Activated CD8-positive, alpha-beta memory T cell treated with anti-CD3 and anti-CD28 coated beads, Interleukin-2, amount 10 ng/mL, durations not matched to agents 7 days and 5 days (primary cell): ENCODE measurements at regions of chr6 and their contacts with region 1.

Region 1: GRCh38 chr6:125790358-125791150 is at the start of gene NCOA7:
- DNase-seq: peak; percentile 89
- ATAC-seq: peak; percentile 85
- H3K4me3 Mint-ChIP-seq: peak within 1 kb of the TSS; percentile 92
- H3K27ac Mint-ChIP-seq: peak within 1 kb of the TSS; percentile 99
- H3K4me1 Mint-ChIP-seq: peaks cover 54% of the 10 kb centered on the region
- H3K27me3 Mint-ChIP-seq: no peaks in the 10 kb centered on the region
- total RNA-seq, gene NCOA7: 45.3 to 46.9 TPM

Region 2: DNA sequence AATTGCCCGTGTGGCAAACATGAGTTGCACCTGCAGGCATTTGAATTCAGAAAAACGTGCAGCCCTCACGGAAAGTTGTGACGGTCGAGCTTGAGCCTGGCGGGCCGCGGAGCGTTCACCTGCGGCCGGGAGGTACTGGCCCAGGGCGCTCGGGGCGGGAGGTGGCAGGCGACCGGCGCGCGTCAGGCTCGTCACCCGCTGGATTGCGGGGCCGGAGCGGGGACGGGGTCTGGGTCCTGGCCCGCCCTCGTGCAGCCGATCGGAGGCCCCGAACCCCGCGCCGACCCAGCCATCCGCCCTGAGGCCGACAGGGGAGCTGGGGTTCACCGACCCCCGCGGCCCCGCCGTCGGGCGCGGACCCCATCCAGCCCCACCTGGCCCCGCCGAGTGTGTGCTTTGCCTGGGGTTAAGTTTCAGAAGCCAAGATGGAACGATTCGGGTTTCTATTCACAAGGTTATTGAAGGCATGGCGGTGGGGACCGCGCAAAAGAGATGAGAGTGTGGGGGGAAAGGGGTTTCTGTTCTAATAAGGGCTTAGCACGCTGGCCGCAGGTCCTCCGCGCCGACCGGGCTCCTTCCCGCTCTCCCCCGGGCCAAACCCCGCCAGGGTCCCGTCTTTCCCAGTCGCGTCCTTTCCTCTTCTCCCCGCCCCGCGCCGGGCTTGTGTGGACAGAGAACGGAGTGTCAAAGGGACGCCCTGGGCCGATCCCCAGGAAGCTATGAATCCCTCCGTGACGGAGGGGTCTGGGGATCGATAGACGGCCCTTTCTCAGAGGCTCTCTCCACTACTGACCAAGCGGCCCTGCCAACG is 42.8 kb before region 1 on chr6:
- CTCF ChIA-PET with region 1: no interaction called
- DNase-seq: peak; percentile 48
- ATAC-seq: peak; percentile 9
- H3K4me3 Mint-ChIP-seq: peak overlapping the region; percentile 82
- H3K27ac Mint-ChIP-seq: no peak overlapping the region
- H3K4me1 Mint-ChIP-seq: peaks cover 40% of the 10 kb centered on the region
- H3K27me3 Mint-ChIP-seq: peaks cover 79% of the 10 kb centered on the region

Region 3: DNA sequence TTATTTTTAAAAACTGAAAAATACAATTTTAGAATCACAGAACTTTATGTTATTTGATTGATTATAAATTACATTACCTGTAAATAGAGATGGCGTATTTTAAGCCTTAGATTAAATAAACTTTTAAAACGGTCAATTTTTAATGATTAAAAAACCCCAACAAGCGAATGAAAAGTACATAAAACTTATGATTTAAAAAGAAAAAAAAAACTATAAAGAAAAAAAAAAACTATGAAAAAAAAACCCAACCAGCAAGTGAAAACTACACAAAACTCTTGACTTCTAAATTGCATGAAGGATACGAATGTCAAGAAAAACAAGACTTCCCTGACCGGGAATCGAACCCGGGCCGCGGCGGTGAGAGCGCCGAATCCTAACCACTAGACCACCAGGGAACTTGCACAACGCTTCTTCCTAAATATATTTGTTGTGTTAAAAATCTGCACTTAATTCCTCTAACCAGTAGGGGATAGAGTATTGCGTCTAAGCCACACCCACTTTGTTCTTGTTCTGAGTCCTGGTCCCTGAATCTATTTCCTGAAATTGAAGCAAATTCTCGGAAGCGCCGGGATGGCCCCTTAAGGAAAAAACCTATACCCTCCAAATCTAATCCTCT is 10.5 kb before region 1 on chr6:
- CTCF ChIA-PET with region 1: interaction called, 87 read pairs
- DNase-seq: peak; percentile 87
- ATAC-seq: peak; percentile 81
- H3K4me3 Mint-ChIP-seq: no peak overlapping the region
- H3K27ac Mint-ChIP-seq: no peak overlapping the region
- H3K4me1 Mint-ChIP-seq: peaks cover 17% of the 10 kb centered on the region
- H3K27me3 Mint-ChIP-seq: peaks cover 20% of the 10 kb centered on the region

Region 4: GRCh38 chr6:125834348-125834747 is 43.8 kb after region 1 on chr6:
- CTCF ChIA-PET with region 1: interaction called, 14 read pairs
- DNase-seq: no peak
- ATAC-seq: peak; percentile 52
- H3K4me3 Mint-ChIP-seq: no peak overlapping the region
- H3K27ac Mint-ChIP-seq: peak overlapping the region; percentile 47
- H3K4me1 Mint-ChIP-seq: peaks cover 48% of the 10 kb centered on the region
- H3K27me3 Mint-ChIP-seq: no peaks in the 10 kb centered on the region

Region 5: GRCh38 chr6:125858427-125859320 is 68.1 kb after region 1 on chr6:
- CTCF ChIA-PET with region 1: interaction called, 17 read pairs
- DNase-seq: peak; percentile 55
- ATAC-seq: peak; percentile 72
- H3K4me3 Mint-ChIP-seq: no peak overlapping the region
- H3K27ac Mint-ChIP-seq: no peak overlapping the region
- H3K4me1 Mint-ChIP-seq: peaks cover 6% of the 10 kb centered on the region
- H3K27me3 Mint-ChIP-seq: no peaks in the 10 kb centered on the region

Region 6: GRCh38 chr6:125918681-125919566 is 128.4 kb after region 1 on chr6:
- CTCF ChIA-PET with region 1: interaction called, 15 read pairs
- DNase-seq: peak; percentile 73
- ATAC-seq: peak; percentile 94
- H3K4me3 Mint-ChIP-seq: peak overlapping the region; percentile 85
- H3K27ac Mint-ChIP-seq: peak overlapping the region; percentile 91
- H3K4me1 Mint-ChIP-seq: peaks cover 44% of the 10 kb centered on the region
- H3K27me3 Mint-ChIP-seq: no peaks in the 10 kb centered on the region

Region 7: GRCh38 chr6:125974214-125974866 is 183.8 kb after region 1 on chr6:
- CTCF ChIA-PET with region 1: interaction called, 43 read pairs
- DNase-seq: no peak
- ATAC-seq: peak; percentile 69
- H3K4me3 Mint-ChIP-seq: no peak overlapping the region
- H3K27ac Mint-ChIP-seq: peak overlapping the region; percentile 8
- H3K4me1 Mint-ChIP-seq: peaks cover 5% of the 10 kb centered on the region
- H3K27me3 Mint-ChIP-seq: no peaks in the 10 kb centered on the region

Region 8: GRCh38 chr6:126040826-126041225 is 250.3 kb after region 1 on chr6:
- CTCF ChIA-PET with region 1: no interaction called
- DNase-seq: no peak
- ATAC-seq: no peak
- H3K4me3 Mint-ChIP-seq: no peak overlapping the region
- H3K27ac Mint-ChIP-seq: peak overlapping the region; percentile 40
- H3K4me1 Mint-ChIP-seq: peaks cover 12% of the 10 kb centered on the region
- H3K27me3 Mint-ChIP-seq: no peaks in the 10 kb centered on the region